Breast epithelium (tissue), 4 donors: ENCODE measurements at regions of chr5 and their contacts with region 1.

Region 1: DNA sequence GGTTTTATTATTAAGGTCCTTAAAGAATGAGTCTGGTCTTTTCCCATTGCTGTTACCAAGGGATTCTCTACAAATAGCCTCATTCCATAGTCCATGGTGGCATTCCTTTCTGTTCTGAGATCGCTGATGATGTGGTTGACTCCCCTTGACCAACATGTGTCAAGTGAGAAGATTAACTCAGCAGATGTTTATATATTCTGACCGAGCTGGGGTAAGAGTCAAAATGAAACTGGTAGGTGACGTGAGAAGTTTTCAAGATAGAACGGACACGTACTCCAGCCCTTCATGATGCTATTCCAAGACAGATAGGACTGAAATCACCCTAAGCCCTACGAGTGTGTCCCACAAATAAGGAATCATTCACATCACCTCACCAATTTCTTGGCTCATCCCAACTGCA is 155.5 kb upstream of the WWC1 start:
- DNase-seq: no peak
- H3K4me3 ChIP-seq: no peak overlapping the region
- H3K27ac ChIP-seq: no peak overlapping the region
- H3K4me1 ChIP-seq: no peaks in the 10 kb centered on the region
- H3K27me3 ChIP-seq: no peaks in the 10 kb centered on the region
- CTCF ChIP-seq: no peak
- POLR2A ChIP-seq: no peak

Region 2: GRCh38 chr5:166399791-166400190 is 1736.1 kb before region 1 on chr5:
- intact Hi-C with region 1: loop called (anchors 10 kb)
- DNase-seq: no peak
- H3K4me3 ChIP-seq: no peak overlapping the region
- H3K27ac ChIP-seq: no peak overlapping the region
- H3K4me1 ChIP-seq: no peaks in the 10 kb centered on the region
- H3K27me3 ChIP-seq: no peaks in the 10 kb centered on the region
- CTCF ChIP-seq: no peak
- POLR2A ChIP-seq: no peak

Region 3: GRCh38 chr5:168193493-168194250 is 57.8 kb after region 1 on chr5:
- intact Hi-C with region 1: no loop called
- DNase-seq: no peak
- H3K4me3 ChIP-seq: no peak overlapping the region
- H3K27ac ChIP-seq: no peak overlapping the region
- H3K4me1 ChIP-seq: no peaks in the 10 kb centered on the region
- H3K27me3 ChIP-seq: peaks cover 0 to 8% of the 10 kb centered on the region in 2 donors
- CTCF ChIP-seq: no peak
- POLR2A ChIP-seq: no peak